PC-3 (cell line): ENCODE measurements at regions of chr11 and their contacts with region 1.

Region 1: DNA sequence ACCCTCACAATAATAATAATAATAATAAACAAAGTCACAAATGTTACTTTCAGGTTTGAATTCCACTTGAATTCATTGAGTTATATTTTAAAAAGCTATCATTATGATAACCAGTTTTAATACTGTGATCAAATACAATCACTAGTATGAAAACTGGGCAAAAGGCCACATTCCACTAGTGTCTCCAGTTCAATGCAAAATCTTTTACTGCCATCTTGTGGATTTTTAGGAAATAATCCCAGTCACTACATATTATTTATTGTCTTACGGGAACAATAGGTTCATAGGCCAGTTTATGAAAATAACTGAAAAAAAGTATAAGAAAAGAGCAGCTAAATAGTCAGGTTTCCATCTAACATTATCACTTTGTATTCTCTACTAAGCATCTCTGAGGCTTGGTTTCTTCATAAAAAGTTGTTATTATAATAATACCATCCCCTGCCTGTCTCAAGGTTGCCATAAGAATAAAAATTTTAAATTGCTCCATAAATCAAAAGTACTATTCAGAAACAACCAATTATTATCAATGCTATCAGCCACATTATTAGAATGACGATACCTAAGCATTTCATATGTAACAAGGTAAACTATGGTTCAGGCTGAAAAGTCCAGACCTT is 533.9 kb upstream of the CCDC90B start:
- DNase-seq: peak; percentile 80
- ATAC-seq: peak; percentile 74; the same call in 1 of the 2 replicates
- H3K4me3 ChIP-seq: no peak overlapping the region
- H3K27ac ChIP-seq: no peak overlapping the region
- H3K4me1 ChIP-seq: peaks cover 5% of the 10 kb centered on the region; the same call in 1 of the 2 replicates
- H3K27me3 ChIP-seq: peaks cover 14% of the 10 kb centered on the region
- CTCF ChIP-seq: peak; percentile 88

Region 2: DNA sequence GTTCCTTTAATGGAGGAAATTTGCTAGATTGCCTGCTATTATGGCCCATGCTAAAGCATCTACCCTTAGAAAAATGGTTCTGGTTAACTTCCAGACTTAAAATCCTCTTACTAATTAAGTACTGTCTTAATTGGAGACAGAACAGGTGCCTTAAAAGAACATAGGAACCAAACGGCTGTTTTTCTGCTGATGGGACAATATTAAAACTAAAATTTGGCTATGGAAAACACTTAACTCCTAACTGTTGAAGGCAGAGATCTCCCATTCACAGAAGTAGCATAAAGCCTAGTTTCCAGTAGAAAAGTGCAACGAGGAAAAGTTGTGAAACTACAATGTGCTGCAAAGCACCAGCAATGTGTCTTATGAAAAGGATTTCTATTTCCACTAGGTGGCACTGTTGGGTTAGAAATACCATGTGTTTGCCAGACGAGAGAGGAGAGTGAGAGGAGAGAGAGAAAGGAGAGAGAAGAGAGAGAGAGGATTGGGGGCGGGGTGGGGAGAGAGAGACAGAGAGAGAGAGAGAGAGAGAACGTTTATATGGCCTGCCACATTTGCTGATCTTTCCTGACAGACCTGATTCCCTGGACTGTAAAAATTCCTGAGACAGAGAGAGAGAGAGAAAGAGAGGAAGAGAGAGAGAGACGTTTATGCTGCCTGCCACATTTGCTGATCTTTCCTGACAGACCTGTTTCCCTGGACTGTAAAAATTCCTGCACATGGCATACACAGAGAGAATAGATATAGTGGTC is 1137.9 kb before region 1 on chr11:
- CTCF ChIA-PET with region 1: interaction called, 3 read pairs
- POLR2A ChIA-PET with region 1: no interaction called
- intact Hi-C with region 1: loop called (anchors 5 kb)
- DNase-seq: peak; percentile 92
- ATAC-seq: peak; percentile 89
- H3K4me3 ChIP-seq: peak overlapping the region; percentile 42; the same call in 1 of the 2 replicates
- H3K27ac ChIP-seq: peak overlapping the region; percentile 25; the same call in 1 of the 2 replicates
- H3K4me1 ChIP-seq: peaks cover 26% of the 10 kb centered on the region
- H3K27me3 ChIP-seq: peaks cover 12% of the 10 kb centered on the region; the same call in 1 of the 2 replicates
- CTCF ChIP-seq: peak; percentile 90

Region 3: GRCh38 chr11:82867495-82868082 is 952.5 kb before region 1 on chr11:
- CTCF ChIA-PET with region 1: no interaction called
- POLR2A ChIA-PET with region 1: no interaction called
- intact Hi-C with region 1: loop called (anchors 2 kb)
- DNase-seq: peak; percentile 92
- ATAC-seq: peak; percentile 31
- H3K4me3 ChIP-seq: peak overlapping the region; percentile 40; the same call in 1 of the 2 replicates
- H3K27ac ChIP-seq: no peak overlapping the region
- H3K4me1 ChIP-seq: peaks cover 11% of the 10 kb centered on the region
- H3K27me3 ChIP-seq: no peaks in the 10 kb centered on the region
- CTCF ChIP-seq: peak; percentile 95

Region 4: GRCh38 chr11:82969811-82970210 is 850.2 kb before region 1 on chr11:
- CTCF ChIA-PET with region 1: no interaction called
- POLR2A ChIA-PET with region 1: no interaction called
- intact Hi-C with region 1: loop called (anchors 5 kb)
- DNase-seq: no peak
- ATAC-seq: no peak
- H3K4me3 ChIP-seq: no peak overlapping the region
- H3K27ac ChIP-seq: no peak overlapping the region
- H3K4me1 ChIP-seq: peaks cover 2% of the 10 kb centered on the region
- H3K27me3 ChIP-seq: no peaks in the 10 kb centered on the region
- CTCF ChIP-seq: no peak

Region 5: DNA sequence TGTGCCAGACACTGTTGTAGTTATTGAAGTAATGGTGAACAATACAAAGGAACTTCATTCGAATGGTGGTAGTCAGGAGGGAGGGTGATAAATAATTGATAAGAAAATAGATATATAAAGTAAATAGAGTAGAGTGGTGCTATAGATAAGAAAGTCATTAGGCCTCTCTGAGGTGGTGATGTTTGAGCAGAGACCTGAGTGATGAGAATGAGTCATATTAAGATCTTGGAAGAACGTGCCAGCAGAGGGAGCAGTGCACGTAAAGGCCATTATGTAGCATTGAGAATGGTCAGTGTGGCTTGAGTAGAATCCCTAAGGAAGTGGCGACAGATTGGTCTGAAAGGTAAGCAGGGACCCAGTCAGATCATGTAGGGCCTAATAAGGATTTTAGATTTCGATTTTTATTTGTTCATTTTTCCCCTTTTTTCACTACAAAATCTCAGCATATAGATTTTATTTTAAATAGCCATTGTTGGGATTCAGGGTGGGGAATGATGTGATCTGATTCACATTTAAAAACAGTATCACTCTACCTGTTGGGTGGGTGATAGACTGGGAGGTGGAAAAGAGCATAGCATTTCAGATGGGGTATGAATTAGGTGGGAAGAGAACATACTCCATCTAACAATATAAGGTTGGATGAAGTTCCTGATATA is 578.6 kb before region 1 on chr11:
- CTCF ChIA-PET with region 1: no interaction called
- POLR2A ChIA-PET with region 1: no interaction called
- intact Hi-C with region 1: loop called (anchors 1 kb)
- DNase-seq: peak; percentile 86
- ATAC-seq: peak; percentile 100
- H3K4me3 ChIP-seq: no peak overlapping the region
- H3K27ac ChIP-seq: no peak overlapping the region
- H3K4me1 ChIP-seq: no peaks in the 10 kb centered on the region
- H3K27me3 ChIP-seq: no peaks in the 10 kb centered on the region
- CTCF ChIP-seq: peak; percentile 85

Region 6: GRCh38 chr11:83249972-83250593 is 570.0 kb before region 1 on chr11:
- CTCF ChIA-PET with region 1: no interaction called
- POLR2A ChIA-PET with region 1: no interaction called
- intact Hi-C with region 1: loop called (anchors 2 kb)
- DNase-seq: peak; percentile 70
- ATAC-seq: peak; percentile 89
- H3K4me3 ChIP-seq: no peak overlapping the region
- H3K27ac ChIP-seq: no peak overlapping the region
- H3K4me1 ChIP-seq: peaks cover 2% of the 10 kb centered on the region; the same call in 1 of the 2 replicates
- H3K27me3 ChIP-seq: no peaks in the 10 kb centered on the region
- CTCF ChIP-seq: peak; percentile 89

Region 7: DNA sequence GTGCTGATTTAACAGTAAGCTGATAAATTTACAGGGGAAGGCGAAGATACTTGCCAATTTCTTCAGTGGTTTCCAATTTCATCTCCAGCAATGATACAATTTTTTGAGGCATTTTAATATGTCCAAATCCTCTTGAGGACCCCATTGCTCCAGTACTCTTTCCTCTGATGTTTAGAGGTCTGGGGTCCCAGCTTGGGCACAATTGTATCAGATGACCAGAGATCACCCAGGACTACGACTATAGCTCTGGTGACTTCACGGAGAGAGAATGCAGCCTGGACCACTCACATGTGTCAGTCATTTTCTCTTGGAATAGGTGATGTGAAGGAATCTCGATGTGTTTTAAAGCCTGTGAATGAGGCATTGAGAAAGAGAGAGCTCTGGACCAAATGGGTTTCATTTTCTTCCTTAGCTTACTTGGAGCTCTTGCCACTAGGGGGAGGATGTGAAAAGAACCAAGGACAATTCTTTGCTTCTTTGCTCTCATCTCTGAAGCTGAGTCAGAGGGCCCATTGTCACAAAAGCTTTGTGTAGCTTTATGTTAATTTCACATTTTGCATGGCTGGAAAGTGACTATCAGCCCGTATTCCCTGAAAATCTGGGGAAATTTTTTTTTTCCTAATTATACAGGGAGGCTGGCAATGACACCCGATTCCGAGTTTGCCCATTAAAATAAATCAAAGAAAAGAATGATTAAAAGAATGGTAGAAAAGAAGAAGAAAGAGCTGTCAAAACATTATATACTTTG is 527.2 kb before region 1 on chr11:
- CTCF ChIA-PET with region 1: interaction called, 7 read pairs
- POLR2A ChIA-PET with region 1: no interaction called
- intact Hi-C with region 1: loop called (anchors 2 kb)
- DNase-seq: peak; percentile 84
- ATAC-seq: peak; percentile 96
- H3K4me3 ChIP-seq: peak overlapping the region; percentile 54; the same call in 1 of the 2 replicates
- H3K27ac ChIP-seq: no peak overlapping the region
- H3K4me1 ChIP-seq: 0 out of 2 replicates have a peak, but pooled peaks cover 4% of the 10 kb centered on the region
- H3K27me3 ChIP-seq: no peaks in the 10 kb centered on the region
- CTCF ChIP-seq: peak; percentile 91